ENCODE measurements at regions of chr2 and their contacts with region 1.

Region 1: DNA sequence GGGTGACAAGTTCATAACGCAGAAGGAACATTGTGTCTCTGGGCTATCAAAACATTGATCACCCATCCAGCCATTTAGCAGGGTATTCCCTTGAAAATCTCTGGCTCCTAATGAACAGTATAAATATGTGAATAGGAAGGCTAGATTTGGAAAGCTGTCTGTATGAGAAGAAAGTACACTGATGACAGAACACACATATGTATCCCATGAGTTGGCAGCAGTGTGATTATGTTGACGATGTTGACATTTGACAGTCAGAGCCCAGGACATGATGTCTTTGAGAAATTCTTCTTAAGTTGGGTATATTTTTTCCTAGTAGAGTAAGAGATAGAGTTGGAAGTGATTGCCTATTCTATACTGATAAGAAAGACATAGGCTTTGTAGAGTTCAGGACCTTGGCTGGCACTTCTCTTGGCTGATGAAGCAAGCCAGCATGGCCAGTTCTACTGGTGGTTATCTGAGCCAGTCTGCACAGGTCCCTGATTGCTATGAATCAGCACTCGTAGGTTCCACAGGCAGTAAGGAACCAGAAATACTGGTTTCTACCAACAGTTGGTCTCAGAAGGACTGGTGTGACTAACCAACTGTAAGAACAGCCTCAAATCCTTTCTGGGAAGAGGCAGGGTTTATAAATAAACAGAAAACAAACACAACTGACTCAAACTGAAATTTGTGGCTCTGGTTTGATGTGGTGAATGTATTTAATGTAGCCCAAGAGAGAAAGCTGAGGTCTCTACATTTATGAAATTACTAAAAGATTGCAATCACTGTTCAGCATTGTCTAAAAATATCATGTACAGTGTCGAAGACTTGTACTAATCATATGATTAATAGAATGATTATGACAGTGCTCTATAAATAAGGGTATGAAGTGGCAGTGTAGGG is 43.9 kb upstream of the RAPH1 start:
- DNase-seq: peak; percentile 64
- H3K4me3 Mint-ChIP-seq: peak overlapping the region; percentile 38
- H3K27ac Mint-ChIP-seq: peak overlapping the region; percentile 46
- H3K4me1 Mint-ChIP-seq: peaks cover 49% of the 10 kb centered on the region
- H3K27me3 Mint-ChIP-seq: peaks cover 40% of the 10 kb centered on the region

Region 2: GRCh38 chr2:203591642-203592041 is 12.6 kb after region 1 on chr2:
- intact Hi-C with region 1: loop called (anchors 1 kb)
- DNase-seq: no peak
- H3K4me3 Mint-ChIP-seq: no peak overlapping the region
- H3K27ac Mint-ChIP-seq: no peak overlapping the region
- H3K4me1 Mint-ChIP-seq: peaks cover 24% of the 10 kb centered on the region
- H3K27me3 Mint-ChIP-seq: peaks cover 51% of the 10 kb centered on the region

Region 3: DNA sequence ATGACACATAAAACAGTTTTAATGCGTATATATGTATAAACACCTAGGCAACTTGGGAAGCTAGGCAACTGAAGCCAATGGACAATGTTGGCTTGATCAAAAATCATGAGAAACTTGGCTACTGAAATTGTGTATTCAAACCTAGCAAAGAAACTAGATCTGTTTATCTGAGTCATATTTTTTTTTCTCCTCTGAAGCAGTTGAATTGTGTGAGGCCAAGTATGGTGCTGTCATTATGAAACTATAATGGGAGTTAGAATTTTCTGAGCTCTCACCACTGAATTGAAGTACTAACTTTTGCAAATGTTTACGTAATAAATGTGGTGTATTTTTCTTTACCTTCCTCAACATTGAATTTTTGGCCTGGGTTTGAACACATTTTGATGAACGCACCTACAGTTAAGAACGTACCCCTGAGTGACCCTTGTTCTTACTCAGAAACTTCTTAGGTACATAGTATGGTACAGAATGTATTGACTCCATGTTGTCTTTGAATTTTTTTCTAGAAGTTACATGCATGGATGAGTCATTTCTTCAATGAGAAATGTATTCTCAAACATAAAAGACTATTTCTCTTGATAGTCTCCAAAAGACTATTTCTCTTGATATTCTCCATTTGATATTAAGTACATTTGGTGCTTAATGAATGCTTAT is 151.2 kb after region 1 on chr2:
- intact Hi-C with region 1: loop called (anchors 1 kb)
- DNase-seq: no peak
- H3K4me3 Mint-ChIP-seq: peak overlapping the region; percentile 32
- H3K27ac Mint-ChIP-seq: peak overlapping the region; percentile 97
- H3K4me1 Mint-ChIP-seq: peaks cover 92% of the 10 kb centered on the region
- H3K27me3 Mint-ChIP-seq: no peaks in the 10 kb centered on the region

Region 4: GRCh38 chr2:203804070-203804469 is 225.1 kb after region 1 on chr2:
- intact Hi-C with region 1: loop called (anchors 1 kb)
- DNase-seq: no peak
- H3K4me3 Mint-ChIP-seq: peak overlapping the region; percentile 19
- H3K27ac Mint-ChIP-seq: peak overlapping the region; percentile 76
- H3K4me1 Mint-ChIP-seq: peaks cover 80% of the 10 kb centered on the region
- H3K27me3 Mint-ChIP-seq: peaks cover 2% of the 10 kb centered on the region

Region 5: DNA sequence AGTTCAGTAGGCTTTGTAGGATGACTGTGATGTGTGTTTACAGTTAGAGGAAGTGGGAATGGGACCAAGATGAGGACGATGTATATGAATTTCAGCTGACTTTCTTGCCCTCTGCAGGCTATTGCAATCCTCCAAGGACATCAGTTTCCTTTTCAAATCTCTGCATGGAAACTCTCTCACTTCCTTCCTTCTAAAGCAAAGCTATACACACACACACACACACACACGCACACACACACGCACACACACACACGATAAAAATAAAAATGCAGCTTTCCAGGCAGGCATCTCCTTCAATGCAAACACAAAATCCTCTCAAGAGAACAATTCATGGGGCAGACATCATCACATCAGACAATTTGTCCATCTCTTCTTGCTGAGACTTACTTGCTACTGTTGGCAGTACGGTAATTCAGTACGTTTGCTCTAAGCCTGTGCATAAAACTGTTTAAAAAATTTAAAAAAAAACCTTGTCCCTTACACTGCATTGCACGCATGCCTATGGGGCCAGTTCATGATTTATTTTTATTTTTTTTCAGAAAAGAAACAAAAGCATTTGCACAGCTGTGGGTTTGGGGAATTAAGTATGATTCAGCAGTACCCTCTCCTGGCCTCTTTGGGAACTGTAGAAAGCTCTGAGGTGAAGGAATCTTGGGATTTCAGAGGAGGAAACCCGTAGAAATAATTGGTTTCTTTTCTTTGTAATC is 330.4 kb after region 1 on chr2:
- intact Hi-C with region 1: loop called (anchors 1 kb)
- DNase-seq: no peak
- H3K4me3 Mint-ChIP-seq: peak overlapping the region; percentile 41
- H3K27ac Mint-ChIP-seq: peak overlapping the region; percentile 62
- H3K4me1 Mint-ChIP-seq: peaks cover 25% of the 10 kb centered on the region
- H3K27me3 Mint-ChIP-seq: peaks cover 2% of the 10 kb centered on the region

Measured in activated T-helper 1 cell treated with anti-CD3 and anti-CD28 coated beads, Interleukin-12 subunit alpha, Interleukin-12 subunit beta, Interleukin-2, Interleukin-4 antibody, amounts not matched to agents 30 ng/mL and 10 ng/mL and 1 ng/mL, durations not matched to agents 14 hours and 24 hours and 36 hours (primary cell).